GM18951 (cell line): ENCODE measurements at regions of chr9 and their contacts with region 1.

Region 1: GRCh38 chr9:136170006-136170901 is 34.7 kb downstream of the LHX3 start:
- POLR2A ChIP-seq: no peak

Region 2: GRCh38 chr9:136267261-136268111 is 97.2 kb after region 1 on chr9:
- in situ Hi-C with region 1: loop called (anchors 25 kb)
- POLR2A ChIP-seq: peak; percentile 74